ENCODE measurements at regions of chr5 and their contacts with region 1.

Region 1: GRCh38 chr5:126776497-126777256 is at the start of gene LMNB1:
- H3K4me3 ChIP-seq: peak within 1 kb of the TSS; percentile 90
- H3K27ac ChIP-seq: peak within 1 kb of the TSS; percentile 100
- H3K4me1 ChIP-seq: no peaks in the 10 kb centered on the region
- CTCF ChIP-seq: peak; percentile 41

Region 2: GRCh38 chr5:126656396-126657007 is 120.2 kb before region 1 on chr5:
- CTCF ChIA-PET with region 1: interaction called, 29 read pairs
- POLR2A ChIA-PET with region 1: interaction called, 9 read pairs
- H3K4me3 ChIP-seq: no peak overlapping the region
- H3K27ac ChIP-seq: no peak overlapping the region
- H3K4me1 ChIP-seq: no peaks in the 10 kb centered on the region
- CTCF ChIP-seq: peak; percentile 60

Region 3: DNA sequence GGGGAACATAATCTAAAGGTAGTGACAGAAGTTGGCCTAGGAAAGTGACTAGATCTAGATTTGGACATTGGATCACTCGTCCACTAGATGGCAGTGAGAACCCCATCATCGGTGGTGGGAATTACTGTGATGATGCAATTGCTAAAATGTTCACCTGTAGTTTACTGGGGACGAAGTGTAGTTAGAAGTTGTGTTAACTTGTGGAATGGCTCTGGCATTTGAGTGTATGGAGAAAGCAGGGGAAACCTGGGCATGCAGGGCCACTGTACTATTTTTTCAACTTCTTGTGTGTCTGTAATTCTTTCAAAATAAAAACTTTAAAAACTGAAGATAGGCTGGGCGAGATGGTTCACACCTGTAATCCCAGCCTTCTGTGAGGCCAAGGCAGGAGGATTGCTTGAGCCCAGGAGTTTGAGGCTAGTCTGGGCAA is 100.5 kb before region 1 on chr5:
- CTCF ChIA-PET with region 1: interaction called, 137 read pairs
- POLR2A ChIA-PET with region 1: interaction called, 51 read pairs
- H3K4me3 ChIP-seq: no peak overlapping the region
- H3K27ac ChIP-seq: no peak overlapping the region
- H3K4me1 ChIP-seq: no peaks in the 10 kb centered on the region
- CTCF ChIP-seq: peak; percentile 83

Region 4: GRCh38 chr5:126736141-126736540 is 40.5 kb before region 1 on chr5:
- CTCF ChIA-PET with region 1: no interaction called
- POLR2A ChIA-PET with region 1: interaction called, 25 read pairs
- H3K4me3 ChIP-seq: no peak overlapping the region
- H3K27ac ChIP-seq: no peak overlapping the region
- H3K4me1 ChIP-seq: no peaks in the 10 kb centered on the region
- CTCF ChIP-seq: no peak

Region 5: DNA sequence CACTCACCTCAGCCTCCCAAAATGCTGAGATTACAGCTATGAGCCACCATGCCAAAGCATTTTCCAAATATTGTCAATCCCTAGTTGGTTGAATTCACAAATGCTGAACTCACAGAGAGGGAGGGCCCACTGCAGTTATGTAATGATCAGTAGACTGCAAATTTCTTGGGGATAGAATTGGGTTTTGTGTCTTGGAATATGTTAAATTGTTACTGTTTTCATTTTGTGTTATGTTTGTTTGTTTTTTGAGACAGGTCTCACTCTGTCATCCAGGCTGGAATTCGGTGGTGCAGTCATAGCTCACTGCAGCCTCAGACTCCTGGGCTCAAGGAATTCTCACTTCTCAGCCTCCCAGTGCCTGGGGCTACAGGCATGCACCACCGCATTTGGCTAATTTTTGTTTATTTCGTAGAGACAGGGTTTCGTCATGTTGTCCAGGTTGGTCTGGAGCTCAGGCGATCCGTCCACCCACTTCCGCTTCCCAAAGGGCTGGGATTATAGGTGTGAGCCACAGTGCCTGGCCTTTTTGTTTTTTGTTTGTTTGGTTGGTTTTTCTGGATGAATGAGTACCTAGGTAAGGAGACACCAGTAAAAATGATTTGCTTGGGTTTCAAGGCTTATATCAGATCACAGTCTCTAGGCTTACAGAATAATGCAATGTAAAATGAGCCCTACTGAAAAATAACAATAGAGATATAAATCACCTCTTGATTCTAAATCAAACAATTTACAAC is 31.3 kb before region 1 on chr5:
- CTCF ChIA-PET with region 1: no interaction called
- POLR2A ChIA-PET with region 1: interaction called, 42 read pairs
- H3K4me3 ChIP-seq: no peak overlapping the region
- H3K27ac ChIP-seq: peak overlapping the region; percentile 53; the same call in 1 of the 2 replicates
- H3K4me1 ChIP-seq: peaks cover 19% of the 10 kb centered on the region
- CTCF ChIP-seq: no peak

Region 6: GRCh38 chr5:126794157-126794828 is 17.6 kb after region 1 on chr5:
- CTCF ChIA-PET with region 1: interaction called, 12 read pairs
- POLR2A ChIA-PET with region 1: interaction called, 12 read pairs
- H3K4me3 ChIP-seq: no peak overlapping the region
- H3K27ac ChIP-seq: no peak overlapping the region
- H3K4me1 ChIP-seq: peaks cover 3% of the 10 kb centered on the region; the same call in 1 of the 2 replicates
- CTCF ChIP-seq: no peak

Region 7: DNA sequence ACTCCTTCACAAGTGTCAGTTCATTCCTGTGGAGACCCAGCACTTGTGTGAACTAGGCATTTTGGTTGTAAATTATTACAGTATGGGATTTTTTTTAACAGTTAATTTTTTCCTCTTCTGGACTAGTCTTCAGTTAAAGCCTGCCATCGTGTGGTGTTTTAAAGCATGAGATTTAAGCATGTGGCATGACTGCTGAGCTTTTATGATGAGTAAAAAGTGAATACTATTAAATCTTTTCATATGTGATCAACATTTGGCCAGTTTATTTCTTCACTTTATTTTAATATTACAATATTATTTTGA is 25.3 kb after region 1 on chr5:
- CTCF ChIA-PET with region 1: interaction called, 14 read pairs
- POLR2A ChIA-PET with region 1: interaction called, 12 read pairs
- H3K4me3 ChIP-seq: no peak overlapping the region
- H3K27ac ChIP-seq: no peak overlapping the region
- H3K4me1 ChIP-seq: peaks cover 5% of the 10 kb centered on the region
- CTCF ChIP-seq: peak; percentile 27; the same call in 1 of the 2 replicates

Measured in HEK293 (cell line).